ENCODE measurements at regions of chr4 and their contacts with region 1.

Region 1: GRCh38 chr4:40199999-40200874 is 3.4 kb downstream of the RHOH start:
- DNase-seq: peak; percentile 86
- H3K4me3 Mint-ChIP-seq: peak overlapping the region; percentile 97
- H3K27ac Mint-ChIP-seq: peak overlapping the region; percentile 99
- H3K4me1 Mint-ChIP-seq: peaks cover 43% of the 10 kb centered on the region
- H3K27me3 Mint-ChIP-seq: no peaks in the 10 kb centered on the region

Region 2: DNA sequence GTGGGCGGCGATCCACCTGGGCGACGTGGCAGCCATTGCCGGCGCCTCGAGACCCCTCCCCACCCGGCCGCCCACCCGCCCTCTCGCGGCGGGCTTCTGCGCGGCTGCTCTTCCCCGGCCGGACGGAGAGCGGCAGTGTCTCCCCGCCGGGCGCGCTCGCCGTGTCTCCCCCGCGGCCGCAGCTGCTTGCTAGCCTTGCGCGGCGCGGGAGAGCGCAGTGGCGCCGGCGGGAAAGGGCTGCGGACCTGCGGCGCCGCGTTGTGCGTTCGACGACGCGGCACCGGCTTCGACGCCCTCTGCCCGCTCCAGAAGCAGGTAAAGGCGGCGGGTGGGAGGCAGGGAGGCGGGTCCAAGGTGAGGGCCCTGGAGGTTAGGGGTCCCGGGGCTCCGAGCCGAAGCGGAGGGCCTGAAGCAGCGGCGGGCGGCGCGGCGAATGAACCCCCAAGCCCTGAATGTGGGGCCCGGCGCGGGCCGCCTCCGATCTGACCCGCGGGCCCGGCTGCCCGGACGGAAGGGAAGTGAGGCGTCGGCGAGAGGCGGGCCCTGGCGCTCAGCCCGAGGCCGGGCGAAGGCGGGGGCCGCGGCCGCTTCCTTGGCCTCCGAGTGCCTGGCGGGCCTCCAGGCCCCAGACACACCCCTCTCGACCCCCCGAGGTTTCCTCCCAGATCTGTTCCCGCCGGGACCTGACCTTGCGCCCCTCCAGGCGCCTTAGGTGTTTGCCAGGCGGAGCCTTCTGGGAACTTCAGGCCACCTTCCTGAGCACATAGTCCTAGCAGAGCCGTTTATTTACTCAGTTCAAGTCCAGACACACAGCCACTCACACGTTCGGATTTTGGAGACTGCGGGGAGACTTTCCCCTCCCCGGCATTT is 143.3 kb before region 1 on chr4 and contains the start of gene N4BP2:
- CTCF ChIA-PET with region 1: interaction called, 13 read pairs
- POLR2A ChIA-PET with region 1: interaction called, 159 read pairs
- DNase-seq: peak; percentile 75
- H3K4me3 Mint-ChIP-seq: peak within 1 kb of the TSS; percentile 97
- H3K27ac Mint-ChIP-seq: peak within 1 kb of the TSS; percentile 99
- H3K4me1 Mint-ChIP-seq: peaks cover 37% of the 10 kb centered on the region
- H3K27me3 Mint-ChIP-seq: no peaks in the 10 kb centered on the region
- total RNA-seq, gene N4BP2: 22.5 to 26.8 TPM

Region 3: GRCh38 chr4:40228497-40229365 is 28.5 kb after region 1 on chr4:
- CTCF ChIA-PET with region 1: interaction called, 44 read pairs
- POLR2A ChIA-PET with region 1: interaction called, 403 read pairs
- DNase-seq: no peak
- H3K4me3 Mint-ChIP-seq: peak overlapping the region; percentile 57
- H3K27ac Mint-ChIP-seq: peak overlapping the region; percentile 75
- H3K4me1 Mint-ChIP-seq: peaks cover 95% of the 10 kb centered on the region
- H3K27me3 Mint-ChIP-seq: no peaks in the 10 kb centered on the region

Region 4: DNA sequence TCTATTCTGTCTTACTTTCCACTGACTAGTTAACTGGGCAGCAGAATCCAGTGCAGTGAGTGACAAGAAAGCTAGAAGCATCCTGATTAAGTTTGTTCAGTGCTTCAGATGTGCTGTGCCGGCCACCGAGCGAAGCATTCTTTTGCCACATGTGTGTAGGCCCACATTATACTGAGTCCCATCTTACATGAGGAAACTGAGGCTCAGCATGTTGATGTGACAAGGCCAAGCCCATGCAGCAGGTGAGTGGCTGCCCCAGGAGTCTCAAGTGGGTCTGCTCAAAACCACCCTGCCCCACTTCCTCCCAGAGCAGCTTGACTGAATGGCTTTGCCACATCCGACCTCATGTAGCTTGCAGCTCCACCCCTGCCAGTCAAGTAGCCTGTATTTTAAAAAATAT is 47.1 kb after region 1 on chr4:
- CTCF ChIA-PET with region 1: no interaction called
- POLR2A ChIA-PET with region 1: interaction called, 112 read pairs
- DNase-seq: peak; percentile 80
- H3K4me3 Mint-ChIP-seq: peak overlapping the region; percentile 2
- H3K27ac Mint-ChIP-seq: peak overlapping the region; percentile 89
- H3K4me1 Mint-ChIP-seq: peaks cover 84% of the 10 kb centered on the region
- H3K27me3 Mint-ChIP-seq: no peaks in the 10 kb centered on the region

Region 5: GRCh38 chr4:40289366-40290188 is 89.3 kb after region 1 on chr4:
- CTCF ChIA-PET with region 1: no interaction called
- POLR2A ChIA-PET with region 1: interaction called, 11 read pairs
- DNase-seq: no peak
- H3K4me3 Mint-ChIP-seq: peak overlapping the region; percentile 40
- H3K27ac Mint-ChIP-seq: peak overlapping the region; percentile 87
- H3K4me1 Mint-ChIP-seq: peaks cover 39% of the 10 kb centered on the region
- H3K27me3 Mint-ChIP-seq: no peaks in the 10 kb centered on the region

Region 6: GRCh38 chr4:40672536-40673526 is 472.6 kb after region 1 on chr4:
- CTCF ChIA-PET with region 1: no interaction called
- POLR2A ChIA-PET with region 1: interaction called, 10 read pairs
- DNase-seq: peak; percentile 70
- H3K4me3 Mint-ChIP-seq: peak overlapping the region; percentile 62
- H3K27ac Mint-ChIP-seq: peak overlapping the region; percentile 95
- H3K4me1 Mint-ChIP-seq: peaks cover 62% of the 10 kb centered on the region
- H3K27me3 Mint-ChIP-seq: no peaks in the 10 kb centered on the region

Measured in activated CD4-positive, alpha-beta memory T cell treated with anti-CD3 and anti-CD28 coated beads, Interleukin-2, amount 10 ng/mL, durations not matched to agents 7 days and 5 days (primary cell).